Heart right ventricle (tissue), 16 donors: ENCODE measurements at regions of chr3 and their contacts with region 1.

Region 1: DNA sequence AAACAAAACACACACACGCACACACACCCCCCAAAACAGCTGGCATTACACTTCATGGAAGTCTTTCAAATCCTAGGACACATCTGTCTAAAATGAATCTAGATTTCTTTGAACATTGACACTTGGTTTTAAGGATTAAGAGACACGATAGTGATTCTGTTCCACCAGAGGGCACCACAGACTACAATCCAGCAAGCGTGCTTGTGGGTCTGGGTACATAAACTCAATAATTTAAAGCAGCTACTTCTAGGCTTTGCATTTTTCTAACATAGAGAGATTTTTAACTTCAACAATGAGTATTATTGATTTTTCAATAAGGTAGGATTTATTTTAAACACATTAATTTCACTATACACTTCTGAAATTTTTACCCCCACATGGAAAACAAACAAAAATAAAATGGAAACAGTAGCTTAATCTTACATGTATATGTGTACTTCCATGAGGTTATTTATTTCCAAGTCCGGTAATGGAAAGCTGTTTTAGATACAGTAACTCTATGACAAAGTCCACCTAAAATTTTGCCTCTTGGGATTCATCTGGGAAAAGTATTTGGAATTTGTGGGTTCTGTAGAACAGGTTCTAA is 564.0 kb upstream of the TGFBR2 start:
- DNase-seq: peak in 1 of 2 donors; percentile 72
- ATAC-seq: peak in 6 of 8 donors; percentile 43 to 78 (median 64)
- H3K4me3 ChIP-seq: no peak overlapping the region
- H3K27ac ChIP-seq: no peak overlapping the region
- H3K4me1 ChIP-seq: peaks cover 0 to 21% (median 4%) of the 10 kb centered on the region in 9 donors
- H3K27me3 ChIP-seq: no peaks in the 10 kb centered on the region
- CTCF ChIP-seq: peak; percentile 54 to 85 (median 79)

Region 2: GRCh38 chr3:30107531-30107930 is 65.2 kb after region 1 on chr3:
- intact Hi-C with region 1: loop called in 3 of 10 experiments (anchors 2 to 10 kb)
- DNase-seq: no peak
- ATAC-seq: no peak
- H3K4me3 ChIP-seq: no peak overlapping the region
- H3K27ac ChIP-seq: no peak overlapping the region
- H3K4me1 ChIP-seq: peaks cover 0 to 11% (median 0%) of the 10 kb centered on the region in 9 donors
- H3K27me3 ChIP-seq: no peaks in the 10 kb centered on the region
- CTCF ChIP-seq: no peak

Region 3: GRCh38 chr3:30112902-30113484 is 70.6 kb after region 1 on chr3:
- intact Hi-C with region 1: loop called in 3 of 10 experiments (anchors 2 to 10 kb)
- DNase-seq: no peak
- ATAC-seq: peak in 5 of 8 donors; percentile 12 to 55 (median 44)
- H3K4me3 ChIP-seq: no peak overlapping the region
- H3K27ac ChIP-seq: no peak overlapping the region
- H3K4me1 ChIP-seq: peaks cover 0 to 20% (median 8%) of the 10 kb centered on the region in 9 donors
- H3K27me3 ChIP-seq: no peaks in the 10 kb centered on the region
- CTCF ChIP-seq: peak; percentile 42 to 81 (median 71)